OCI-LY7 (cell line): ENCODE measurements at regions of chr3 and their contacts with region 1.

Region 1: DNA sequence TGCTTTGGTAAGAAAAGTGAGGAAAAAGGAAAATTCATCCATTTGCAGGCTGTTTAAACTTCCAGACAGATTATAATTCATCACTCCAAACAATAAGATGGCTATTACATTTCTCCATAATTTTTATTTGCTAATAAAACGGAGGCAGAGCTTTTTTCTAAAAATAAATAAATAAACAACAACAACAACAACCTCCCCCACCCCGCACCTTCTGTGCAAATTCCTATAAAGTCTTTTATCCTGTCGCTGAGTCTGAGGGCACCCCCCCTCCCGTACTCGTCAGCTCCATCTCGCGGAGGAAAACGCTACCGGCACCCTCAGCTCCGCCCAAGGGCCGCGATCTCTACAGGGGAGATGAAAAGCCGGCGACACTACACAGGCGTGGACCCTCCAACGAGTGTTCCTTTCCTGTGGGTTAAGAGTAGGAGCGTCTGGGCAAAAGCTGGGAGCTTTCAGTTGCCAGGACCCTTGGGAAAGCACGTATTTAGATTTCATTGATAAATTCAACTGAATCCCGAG is 1.0 kb upstream of the ATP1B3 start:
- DNase-seq: peak; percentile 90
- H3K4me3 ChIP-seq: peak overlapping the region; percentile 98
- H3K27ac ChIP-seq: peak overlapping the region; percentile 86
- H3K4me1 ChIP-seq: peaks cover 23% of the 10 kb centered on the region
- CTCF ChIP-seq: peak; percentile 92

Region 2: GRCh38 chr3:141397996-141398395 is 477.4 kb before region 1 on chr3:
- CTCF ChIA-PET with region 1: no interaction called
- POLR2A ChIA-PET with region 1: no interaction called
- intact Hi-C with region 1: no loop called
- DNase-seq: no peak
- H3K4me3 ChIP-seq: no peak overlapping the region
- H3K27ac ChIP-seq: no peak overlapping the region
- H3K4me1 ChIP-seq: no peaks in the 10 kb centered on the region
- CTCF ChIP-seq: no peak

Region 3: DNA sequence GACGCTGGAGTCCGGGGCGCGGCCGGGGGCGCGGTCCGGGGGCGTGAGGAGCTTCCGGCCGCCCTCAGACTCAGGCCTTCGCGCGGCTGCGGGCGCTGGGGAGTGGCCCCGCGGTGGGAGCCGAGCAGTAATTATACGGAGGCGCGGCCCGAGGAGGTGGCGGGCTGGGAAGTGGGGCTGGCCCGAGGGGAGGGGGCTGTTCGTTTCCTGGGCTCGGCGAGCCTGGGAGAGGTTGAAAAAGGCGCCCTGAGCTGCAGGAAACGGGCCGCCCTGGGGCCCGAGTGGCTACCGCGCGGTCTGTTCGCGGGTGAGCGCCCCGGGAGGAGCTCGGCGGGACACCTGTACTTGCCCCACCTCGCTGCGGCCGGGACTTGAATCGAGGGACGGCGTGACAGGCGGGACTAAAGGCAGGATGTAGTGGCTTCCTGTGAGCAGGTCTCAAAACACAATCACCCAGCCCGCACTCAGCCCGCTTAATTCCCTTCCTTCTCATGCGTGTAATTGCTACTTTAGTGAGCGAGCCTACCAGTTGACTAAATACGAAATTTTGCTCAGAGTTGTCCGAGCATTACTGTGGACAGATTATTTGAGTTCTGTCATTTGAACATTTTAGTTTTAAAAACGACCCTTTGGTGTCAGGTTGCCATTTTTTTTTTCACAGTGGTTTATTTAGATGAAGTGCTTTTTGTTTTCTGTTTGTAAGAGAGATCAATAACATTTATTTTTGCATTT is 387.7 kb before region 1 on chr3:
- CTCF ChIA-PET with region 1: no interaction called
- POLR2A ChIA-PET with region 1: no interaction called
- intact Hi-C with region 1: loop called (anchors 10 kb)
- DNase-seq: peak; percentile 94
- H3K4me3 ChIP-seq: peak overlapping the region; percentile 97
- H3K27ac ChIP-seq: peak overlapping the region; percentile 80
- H3K4me1 ChIP-seq: peaks cover 36% of the 10 kb centered on the region
- CTCF ChIP-seq: no peak

Region 4: DNA sequence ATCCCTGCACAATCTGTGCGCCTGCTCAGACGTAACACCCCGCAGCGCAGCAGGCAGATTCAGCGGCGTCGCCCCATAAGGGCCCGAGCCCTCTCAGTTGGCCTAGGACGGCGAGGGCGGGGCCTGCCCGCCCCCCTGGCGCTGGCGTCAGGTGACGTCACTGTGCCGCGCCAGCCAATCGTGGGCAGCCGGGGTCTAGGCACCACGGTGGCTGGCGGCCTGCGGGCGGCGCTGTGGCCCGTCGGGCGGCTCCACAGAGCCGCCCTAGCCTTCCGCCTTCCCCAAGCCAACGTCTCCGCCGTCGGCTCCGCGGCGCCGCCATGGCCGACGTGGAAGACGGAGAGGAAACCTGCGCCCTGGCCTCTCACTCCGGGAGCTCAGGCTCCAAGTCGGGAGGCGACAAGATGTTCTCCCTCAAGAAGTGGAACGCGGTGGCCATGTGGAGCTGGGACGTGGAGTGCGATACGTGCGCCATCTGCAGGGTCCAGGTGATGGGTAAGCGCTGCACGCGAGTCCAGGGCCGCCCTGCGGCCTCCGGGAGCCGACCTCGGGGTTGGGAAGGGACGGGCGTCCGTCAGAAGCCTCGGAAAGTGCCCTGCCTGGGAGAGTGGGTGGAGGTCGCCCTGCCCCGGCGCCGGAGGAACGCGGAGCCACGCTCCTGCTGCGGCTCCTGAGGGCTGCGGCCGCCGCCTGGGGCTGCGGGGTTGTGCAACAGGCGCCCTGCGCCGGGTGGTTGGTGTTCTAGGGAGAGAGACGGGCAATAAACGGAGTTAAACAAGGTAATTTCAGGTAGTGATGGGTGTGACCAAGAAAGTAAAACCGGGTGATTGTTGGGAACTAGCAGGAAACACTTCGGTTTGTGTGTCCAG is 137.2 kb before region 1 on chr3 and contains the start of gene RNF7:
- CTCF ChIA-PET with region 1: no interaction called
- POLR2A ChIA-PET with region 1: interaction called, 13 read pairs
- intact Hi-C with region 1: loop called (anchors 1 kb)
- DNase-seq: peak; percentile 98
- H3K4me3 ChIP-seq: peak within 1 kb of the TSS; percentile 96
- H3K27ac ChIP-seq: peak within 1 kb of the TSS; percentile 71
- H3K4me1 ChIP-seq: peaks cover 40% of the 10 kb centered on the region
- CTCF ChIP-seq: peak; percentile 86
- total RNA-seq, gene RNF7: 36.3 and 47.3 TPM in 2 replicates

Region 5: DNA sequence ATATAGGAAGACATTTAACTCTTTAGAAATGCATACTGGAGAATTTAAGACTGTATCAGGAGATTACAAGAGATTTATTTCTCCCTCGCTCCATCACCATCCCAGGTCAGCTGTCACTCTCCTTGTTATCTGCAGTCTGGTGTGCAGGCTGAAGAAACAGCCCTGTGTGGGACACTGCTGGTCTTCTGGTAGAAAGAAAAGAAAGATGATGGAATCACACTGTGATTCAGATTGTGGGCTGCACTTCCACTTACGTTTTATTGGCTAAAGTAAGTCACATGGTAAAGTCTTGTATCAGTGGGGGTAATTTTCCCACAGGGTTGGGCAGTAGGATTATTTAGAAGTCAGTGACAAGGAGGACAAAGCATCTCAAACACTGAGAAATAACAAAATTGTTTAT is 17.1 kb before region 1 on chr3:
- CTCF ChIA-PET with region 1: no interaction called
- POLR2A ChIA-PET with region 1: interaction called, 12 read pairs
- intact Hi-C with region 1: no loop called
- DNase-seq: no peak
- H3K4me3 ChIP-seq: no peak overlapping the region
- H3K27ac ChIP-seq: no peak overlapping the region
- H3K4me1 ChIP-seq: no peaks in the 10 kb centered on the region
- CTCF ChIP-seq: no peak

Region 6: DNA sequence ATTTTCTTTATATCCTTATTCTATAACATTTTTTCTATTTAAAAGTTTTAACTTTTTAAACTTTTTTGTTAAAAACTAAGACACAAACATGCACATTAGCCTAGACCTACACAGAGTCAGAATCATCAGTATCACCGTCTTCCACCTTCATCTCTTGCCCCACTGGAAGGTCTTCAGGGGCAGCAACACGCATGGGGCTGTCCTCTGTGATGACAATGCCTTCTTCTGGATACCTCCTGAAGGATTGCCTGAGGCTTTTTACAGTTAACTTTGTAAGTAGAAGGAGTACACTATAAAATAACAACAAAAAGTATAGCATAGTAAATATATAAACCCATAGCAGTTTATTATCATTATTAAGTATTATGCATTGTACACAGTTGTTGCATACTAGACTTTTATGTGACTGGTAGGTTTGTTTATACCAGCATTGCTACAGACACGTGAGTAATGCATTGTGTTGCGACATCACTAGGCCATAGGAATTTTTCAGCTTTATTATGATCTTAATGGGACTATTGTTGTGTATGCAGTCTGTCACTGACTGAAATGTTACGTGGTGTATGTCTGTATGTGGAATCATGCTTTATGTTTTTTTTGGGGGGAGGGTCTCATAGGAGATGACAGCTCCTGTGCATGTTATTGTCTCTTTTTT is 19.2 kb after region 1 on chr3:
- CTCF ChIA-PET with region 1: no interaction called
- POLR2A ChIA-PET with region 1: interaction called, 6 read pairs
- intact Hi-C with region 1: loop called (anchors 2 kb)
- DNase-seq: no peak
- H3K4me3 ChIP-seq: no peak overlapping the region
- H3K27ac ChIP-seq: no peak overlapping the region
- H3K4me1 ChIP-seq: no peaks in the 10 kb centered on the region
- CTCF ChIP-seq: no peak

Region 7: GRCh38 chr3:141913150-141913811 is 37.8 kb after region 1 on chr3:
- CTCF ChIA-PET with region 1: interaction called, 8 read pairs
- POLR2A ChIA-PET with region 1: interaction called, 3 read pairs
- intact Hi-C with region 1: loop called (anchors 2 kb)
- DNase-seq: peak; percentile 72
- H3K4me3 ChIP-seq: no peak overlapping the region
- H3K27ac ChIP-seq: no peak overlapping the region
- H3K4me1 ChIP-seq: no peaks in the 10 kb centered on the region
- CTCF ChIP-seq: peak; percentile 87

Region 8: GRCh38 chr3:142148792-142149672 is 273.6 kb after region 1 on chr3 and contains the start of gene TFDP2:
- CTCF ChIA-PET with region 1: no interaction called
- POLR2A ChIA-PET with region 1: interaction called, 8 read pairs
- intact Hi-C with region 1: loop called (anchors 2 kb)
- DNase-seq: peak; percentile 93
- H3K4me3 ChIP-seq: peak within 1 kb of the TSS; percentile 77
- H3K27ac ChIP-seq: peak within 1 kb of the TSS; percentile 71
- H3K4me1 ChIP-seq: peaks cover 30% of the 10 kb centered on the region
- CTCF ChIP-seq: 0 out of 2 replicates have a peak, but pooled peaks have one; percentile 16
- total RNA-seq, gene TFDP2: 169 and 201 TPM in 2 replicates